IMR-90 (cell line): ENCODE measurements at regions of chr1 and their contacts with region 1.

Region 1: GRCh38 chr1:234772345-234773147 is 162.6 kb upstream of the IRF2BP2 start:
- DNase-seq: peak; percentile 99
- ATAC-seq: peak; percentile 98
- H3K4me3 ChIP-seq: no peak overlapping the region
- H3K27ac ChIP-seq: peak overlapping the region; percentile 80
- H3K4me1 ChIP-seq: peaks cover 7% of the 10 kb centered on the region
- H3K27me3 ChIP-seq: peaks cover 9% of the 10 kb centered on the region
- CTCF ChIP-seq: no peak
- POLR2A ChIP-seq: peak; percentile 71
- RAD21 ChIP-seq: 0 out of 2 replicates have a peak, but pooled peaks have one; percentile 40

Region 2: GRCh38 chr1:234851450-234852438 is 79.2 kb after region 1 on chr1:
- CTCF ChIA-PET with region 1: no interaction called
- POLR2A ChIA-PET with region 1: no interaction called
- dilution Hi-C with region 1: no loop called
- in situ Hi-C with region 1: no loop called
- intact Hi-C with region 1: no loop called
- DNase-seq: peak; percentile 55
- ATAC-seq: no peak
- H3K4me3 ChIP-seq: no peak overlapping the region
- H3K27ac ChIP-seq: no peak overlapping the region
- H3K4me1 ChIP-seq: peaks cover 11% of the 10 kb centered on the region
- H3K27me3 ChIP-seq: no peaks in the 10 kb centered on the region
- CTCF ChIP-seq: no peak
- POLR2A ChIP-seq: no peak
- RAD21 ChIP-seq: 0 out of 2 replicates have a peak, but pooled peaks have one; percentile 1

Region 3: DNA sequence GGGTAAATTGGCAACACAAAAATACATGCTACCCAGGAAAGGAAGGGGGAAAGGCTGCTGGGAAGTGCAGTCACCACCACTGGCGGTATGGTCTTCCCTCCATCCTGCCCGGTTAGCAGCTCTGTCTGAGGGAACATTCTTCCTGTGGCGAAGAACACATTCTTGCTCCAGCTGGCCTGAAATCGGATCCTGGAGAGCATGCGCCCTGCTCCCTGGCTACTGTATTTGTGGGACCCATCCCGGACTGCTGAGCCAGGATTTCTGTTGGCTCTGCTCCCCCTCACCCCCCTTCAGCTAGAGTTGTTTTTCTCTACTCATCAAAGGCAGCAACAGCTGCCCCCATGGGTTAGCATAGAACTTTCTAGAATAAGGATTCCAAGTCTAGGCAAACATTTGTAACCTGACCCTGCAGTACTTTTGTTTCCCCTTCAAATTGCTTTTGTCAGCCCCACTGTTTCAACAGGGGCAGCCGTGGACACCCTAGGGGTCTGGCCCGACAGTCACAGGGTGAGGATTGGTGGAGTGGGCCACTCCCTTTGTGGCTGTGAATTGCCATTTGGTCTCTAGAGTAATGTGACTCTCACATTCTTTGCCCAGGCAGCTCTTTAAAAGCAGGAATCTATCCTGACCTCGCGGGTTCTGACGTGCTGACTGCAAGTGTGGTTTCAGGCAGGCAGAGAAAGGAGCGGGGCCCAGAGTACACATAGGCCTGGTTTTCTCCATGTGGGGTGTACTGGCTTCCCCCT is 198.4 kb after region 1 on chr1:
- CTCF ChIA-PET with region 1: no interaction called
- POLR2A ChIA-PET with region 1: no interaction called
- dilution Hi-C with region 1: no loop called
- in situ Hi-C with region 1: no loop called
- intact Hi-C with region 1: loop called (anchors 2 kb)
- DNase-seq: peak; percentile 98
- ATAC-seq: peak; percentile 78
- H3K4me3 ChIP-seq: no peak overlapping the region
- H3K27ac ChIP-seq: peak overlapping the region; percentile 95
- H3K4me1 ChIP-seq: peaks cover 38% of the 10 kb centered on the region
- H3K27me3 ChIP-seq: no peaks in the 10 kb centered on the region
- CTCF ChIP-seq: 0 out of 2 replicates have a peak, but pooled peaks have one; percentile 11
- POLR2A ChIP-seq: peak; percentile 55
- RAD21 ChIP-seq: peak; percentile 28; the same call in 1 of the 2 replicates

Region 4: DNA sequence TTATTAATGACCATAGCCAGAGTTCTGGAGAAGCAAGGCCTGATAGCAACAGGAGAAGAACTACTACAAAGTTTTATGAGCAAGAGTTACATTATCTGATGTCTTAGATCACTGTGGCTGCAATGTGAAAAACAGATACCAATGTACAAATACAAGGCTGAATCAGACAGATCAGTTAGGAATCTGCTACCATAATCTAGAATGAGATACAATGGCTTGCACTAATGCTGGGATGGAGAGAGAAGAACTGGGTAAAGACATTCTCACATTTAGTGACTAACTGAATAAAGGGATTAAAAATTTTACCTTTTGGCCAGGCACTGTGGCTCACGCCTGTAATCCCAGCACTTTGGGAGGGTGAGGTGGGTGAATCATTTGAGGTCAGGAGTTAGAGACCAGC is 514.1 kb after region 1 on chr1:
- CTCF ChIA-PET with region 1: no interaction called
- POLR2A ChIA-PET with region 1: no interaction called
- dilution Hi-C with region 1: no loop called
- in situ Hi-C with region 1: no loop called
- intact Hi-C with region 1: no loop called
- DNase-seq: peak; percentile 20
- ATAC-seq: peak; percentile 51
- H3K4me3 ChIP-seq: no peak overlapping the region
- H3K27ac ChIP-seq: no peak overlapping the region
- H3K4me1 ChIP-seq: peaks cover 3% of the 10 kb centered on the region
- H3K27me3 ChIP-seq: no peaks in the 10 kb centered on the region
- CTCF ChIP-seq: no peak
- POLR2A ChIP-seq: no peak
- RAD21 ChIP-seq: no peak